ENCODE measurements at regions of chr7 and their contacts with region 1.

Region 1: DNA sequence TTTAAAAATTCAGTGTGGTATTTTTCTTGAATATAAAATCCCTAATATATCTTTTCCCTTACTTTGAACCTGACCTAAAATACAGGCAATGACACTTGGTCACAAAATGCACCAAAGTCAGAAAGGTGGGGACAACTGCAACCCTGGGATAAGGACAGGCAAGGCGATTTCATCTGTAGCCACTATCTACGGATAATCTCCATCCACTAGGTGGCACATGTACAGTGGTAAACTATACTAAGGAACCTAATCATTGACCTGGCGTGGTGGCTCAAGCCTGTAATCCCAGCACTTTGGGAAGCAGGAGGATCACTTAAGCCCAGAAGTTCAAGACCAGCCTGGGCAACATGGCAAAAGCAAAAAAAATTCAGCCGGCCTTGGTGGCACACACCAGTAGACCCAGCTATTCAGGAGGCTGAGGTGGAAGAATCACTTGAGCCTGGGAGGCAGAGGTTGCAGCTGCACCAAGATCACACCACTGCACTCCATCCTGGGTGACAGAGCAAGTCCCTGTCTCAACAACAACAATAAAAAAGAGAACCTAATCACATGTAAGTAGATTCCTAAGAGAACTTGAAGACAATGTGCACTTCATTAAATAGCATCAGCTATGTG is 98.9 kb downstream of the KMT2C start:
- DNase-seq: peak; percentile 76
- H3K4me3 Mint-ChIP-seq: peak overlapping the region; percentile 70
- H3K27ac Mint-ChIP-seq: peak overlapping the region; percentile 64
- H3K4me1 Mint-ChIP-seq: peaks cover 27% of the 10 kb centered on the region
- H3K27me3 Mint-ChIP-seq: no peaks in the 10 kb centered on the region

Region 2: DNA sequence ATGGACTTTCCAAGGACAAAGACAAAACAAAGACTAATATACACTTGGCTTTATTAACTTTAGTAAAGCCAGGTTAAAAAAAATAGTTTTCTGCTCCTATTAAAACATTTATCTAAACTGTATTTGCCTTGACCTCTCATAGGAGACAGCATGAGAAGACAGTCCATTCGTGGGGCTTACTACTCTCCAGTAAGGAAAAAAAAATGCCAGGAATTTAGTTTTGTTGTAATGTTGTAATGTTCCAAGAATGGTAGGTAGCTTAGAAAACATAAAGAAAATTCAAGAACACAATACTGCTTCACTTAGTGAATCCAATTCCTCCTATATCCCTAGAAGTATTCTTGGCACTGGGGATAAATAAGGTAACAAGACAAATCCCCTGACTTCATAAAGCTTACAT is 17.2 kb after region 1 on chr7:
- intact Hi-C with region 1: no loop called
- DNase-seq: no peak
- H3K4me3 Mint-ChIP-seq: no peak overlapping the region
- H3K27ac Mint-ChIP-seq: no peak overlapping the region
- H3K4me1 Mint-ChIP-seq: peaks cover 11% of the 10 kb centered on the region
- H3K27me3 Mint-ChIP-seq: no peaks in the 10 kb centered on the region

Region 3: GRCh38 chr7:152436111-152436930 is 99.5 kb after region 1 on chr7:
- intact Hi-C with region 1: loop called (anchors 1 kb)
- DNase-seq: peak; percentile 95
- H3K4me3 Mint-ChIP-seq: peak overlapping the region; percentile 79
- H3K27ac Mint-ChIP-seq: peak overlapping the region; percentile 86
- H3K4me1 Mint-ChIP-seq: peaks cover 18% of the 10 kb centered on the region
- H3K27me3 Mint-ChIP-seq: peaks cover 3% of the 10 kb centered on the region

Region 4: GRCh38 chr7:152709287-152710152 is 372.7 kb after region 1 on chr7:
- intact Hi-C with region 1: loop called (anchors 10 kb)
- DNase-seq: no peak
- H3K4me3 Mint-ChIP-seq: no peak overlapping the region
- H3K27ac Mint-ChIP-seq: no peak overlapping the region
- H3K4me1 Mint-ChIP-seq: no peaks in the 10 kb centered on the region
- H3K27me3 Mint-ChIP-seq: no peaks in the 10 kb centered on the region